ENCODE measurements at regions of chr11 and their contacts with region 1.

Region 1: DNA sequence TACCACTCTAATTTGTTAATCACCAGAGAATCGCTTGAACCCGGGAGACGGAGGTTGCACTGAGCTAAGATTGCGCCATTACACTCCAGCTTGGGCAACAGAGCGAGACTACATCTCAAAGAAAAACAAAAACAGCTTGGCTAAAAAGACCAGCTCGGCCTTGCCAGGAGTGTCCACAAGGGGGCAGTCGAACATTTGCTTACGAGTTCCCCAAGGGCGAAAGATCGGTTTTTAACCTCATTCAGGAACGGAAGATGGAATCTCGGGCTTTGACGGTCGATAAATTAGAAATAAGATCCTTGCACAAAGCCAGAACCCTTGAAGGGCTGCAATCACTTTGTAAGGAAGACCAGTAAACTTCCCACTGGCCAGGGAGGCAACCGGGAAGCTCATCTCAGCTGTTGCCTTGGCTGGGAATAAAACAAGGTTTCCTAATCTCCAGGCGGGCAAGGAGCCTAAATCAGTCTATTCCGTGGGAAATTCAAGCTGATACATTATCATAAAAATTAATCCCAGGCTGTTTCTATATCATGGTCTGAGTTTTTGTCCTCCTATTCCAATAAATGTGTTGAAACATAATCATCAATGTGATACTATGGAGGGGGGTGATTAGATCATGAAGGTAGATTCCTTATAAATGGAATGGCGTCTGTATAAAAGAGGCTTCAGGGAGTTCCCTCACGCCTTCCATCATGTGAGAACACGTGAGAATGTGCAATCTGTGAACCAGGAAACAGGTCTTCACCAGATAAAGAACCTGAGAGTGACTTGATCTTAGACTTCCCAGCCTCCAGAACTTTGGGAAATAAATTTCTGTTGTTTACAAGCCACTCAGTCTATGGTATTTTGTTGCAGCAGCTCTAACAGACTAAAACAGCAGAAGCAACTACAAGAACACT is 14.9 kb upstream of the SLC29A2 start:
- DNase-seq: peak; percentile 88
- ATAC-seq: peak; percentile 68 to 82

Region 2: GRCh38 chr11:66011239-66011784 is 375.1 kb before region 1 on chr11:
- intact Hi-C with region 1: no loop called
- DNase-seq: no peak
- ATAC-seq: peak in 1 of 2 donors; percentile 34

Region 3: GRCh38 chr11:66311965-66312548 is 74.4 kb before region 1 on chr11:
- intact Hi-C with region 1: loop called in 1 of 2 experiments (anchors 5 kb)
- DNase-seq: peak; percentile 94
- ATAC-seq: peak; percentile 79 to 86

Region 4: DNA sequence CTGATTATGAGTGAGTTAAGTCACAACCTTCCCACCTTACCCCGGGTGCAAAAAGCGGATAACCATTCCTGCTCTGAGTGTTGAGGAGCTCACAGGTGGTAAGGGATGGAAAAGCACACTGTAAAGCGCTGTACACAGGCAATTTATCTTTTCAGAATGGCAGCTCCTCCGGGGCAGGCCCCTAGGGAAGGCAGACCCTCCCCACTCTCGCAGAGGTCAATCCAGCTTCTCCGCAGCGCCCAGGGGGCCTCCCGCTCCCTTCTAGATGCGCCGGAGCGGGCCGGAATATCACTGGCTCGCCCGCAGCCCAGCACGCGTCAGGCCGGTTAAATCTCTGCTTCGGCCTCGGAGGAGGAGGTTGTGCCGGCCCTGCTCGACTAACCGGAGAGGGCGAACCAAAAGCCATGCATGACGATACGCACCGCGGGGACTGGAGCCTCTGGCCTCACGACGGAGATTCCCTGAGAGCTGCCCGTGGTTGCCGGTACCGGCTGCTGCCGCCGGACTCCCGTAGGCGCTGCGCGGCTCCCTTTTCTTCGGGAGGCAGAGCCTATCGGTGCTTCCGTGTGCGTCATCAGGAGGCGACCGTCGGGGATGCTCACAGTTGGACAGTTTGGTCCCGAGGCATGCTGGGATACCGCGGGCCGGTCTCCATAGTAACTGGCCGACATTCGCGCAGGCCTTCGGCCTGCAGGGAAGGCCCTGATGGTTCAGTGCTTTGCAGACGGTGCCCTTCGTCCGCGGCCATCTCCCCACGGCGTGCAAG is 41.7 kb before region 1 on chr11 and contains the start of gene BRMS1:
- intact Hi-C with region 1: loop called in 1 of 2 experiments (anchors 5 kb)
- DNase-seq: peak; percentile 100
- ATAC-seq: peak; percentile 87 to 91
- total RNA-seq, gene BRMS1: 14.9 to 19.3 TPM